Ascending aorta (tissue), 2 donors: ENCODE measurements at regions of chr1 and their contacts with region 1.

Region 1: GRCh38 chr1:54764133-54764921 is at the start of gene PARS2:
- DNase-seq: peak; percentile 92 to 98
- H3K4me3 ChIP-seq: peak within 1 kb of the TSS; percentile 70 to 86
- H3K27ac ChIP-seq: peak within 1 kb of the TSS; percentile 29 to 72
- H3K4me1 ChIP-seq: peaks cover 4 to 5% of the 10 kb centered on the region in 2 donors
- H3K27me3 ChIP-seq: no peaks in the 10 kb centered on the region
- CTCF ChIP-seq: no peak
- total RNA-seq, gene PARS2: 0.43 TPM

Region 2: DNA sequence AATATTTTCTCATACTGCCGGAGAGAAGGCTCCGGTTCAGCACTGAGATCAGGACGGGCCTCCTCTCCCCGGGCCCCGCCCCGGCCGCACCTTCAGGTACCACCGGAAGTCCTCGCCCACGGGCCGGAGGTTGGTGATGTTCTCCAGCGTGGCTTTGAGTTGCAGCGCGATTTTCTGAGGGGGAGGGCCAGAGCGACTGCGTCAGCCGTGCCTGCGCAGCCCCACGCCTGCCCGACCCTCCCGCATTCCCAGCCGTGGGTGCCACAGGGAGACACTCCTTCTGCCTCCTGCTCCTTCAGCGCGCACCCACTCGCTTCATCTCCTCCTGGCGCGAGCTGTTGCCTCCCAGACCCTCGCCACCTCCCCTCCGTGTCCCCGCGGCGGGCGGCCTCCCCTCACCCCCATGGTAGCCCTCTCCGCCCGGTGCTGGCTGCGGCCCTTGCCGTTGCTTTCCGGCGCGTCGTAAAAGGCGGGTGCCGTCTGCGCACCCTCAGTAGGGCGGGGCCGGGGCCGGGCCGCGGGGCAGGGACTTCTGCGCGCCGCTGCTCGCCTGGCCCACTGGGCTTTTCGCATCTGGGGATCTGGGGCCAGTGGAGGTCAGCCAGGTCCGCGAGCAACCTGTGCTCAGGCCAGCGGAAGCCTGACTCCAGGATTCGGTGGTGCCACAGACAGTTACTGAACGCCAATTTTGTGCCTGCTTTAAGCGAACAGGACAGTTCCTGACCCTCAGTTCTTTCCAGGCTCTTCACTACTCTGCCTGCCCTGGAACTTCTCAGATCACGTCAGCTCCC is 1544.0 kb before region 1 on chr1 and contains the start of gene CZIB:
- intact Hi-C with region 1: loop called (anchors 10 kb)
- DNase-seq: peak; percentile 65 to 96
- H3K4me3 ChIP-seq: peak within 1 kb of the TSS; percentile 72 to 88
- H3K27ac ChIP-seq: peak within 1 kb of the TSS; percentile 91 to 98
- H3K4me1 ChIP-seq: peaks cover 3 to 12% of the 10 kb centered on the region in 2 donors
- H3K27me3 ChIP-seq: no peaks in the 10 kb centered on the region
- CTCF ChIP-seq: no peak
- total RNA-seq, gene CZIB: 28.9 TPM

Region 3: GRCh38 chr1:53945433-53946251 is 818.7 kb before region 1 on chr1 and contains the start of gene IFT25:
- intact Hi-C with region 1: loop called (anchors 10 kb)
- DNase-seq: peak; percentile 87 to 98
- H3K4me3 ChIP-seq: peak within 1 kb of the TSS; percentile 80 to 96
- H3K27ac ChIP-seq: peak within 1 kb of the TSS; percentile 77 to 98
- H3K4me1 ChIP-seq: peaks cover 9 to 16% of the 10 kb centered on the region in 2 donors
- H3K27me3 ChIP-seq: no peaks in the 10 kb centered on the region
- CTCF ChIP-seq: no peak
- total RNA-seq, gene IFT25: not detected

Region 4: DNA sequence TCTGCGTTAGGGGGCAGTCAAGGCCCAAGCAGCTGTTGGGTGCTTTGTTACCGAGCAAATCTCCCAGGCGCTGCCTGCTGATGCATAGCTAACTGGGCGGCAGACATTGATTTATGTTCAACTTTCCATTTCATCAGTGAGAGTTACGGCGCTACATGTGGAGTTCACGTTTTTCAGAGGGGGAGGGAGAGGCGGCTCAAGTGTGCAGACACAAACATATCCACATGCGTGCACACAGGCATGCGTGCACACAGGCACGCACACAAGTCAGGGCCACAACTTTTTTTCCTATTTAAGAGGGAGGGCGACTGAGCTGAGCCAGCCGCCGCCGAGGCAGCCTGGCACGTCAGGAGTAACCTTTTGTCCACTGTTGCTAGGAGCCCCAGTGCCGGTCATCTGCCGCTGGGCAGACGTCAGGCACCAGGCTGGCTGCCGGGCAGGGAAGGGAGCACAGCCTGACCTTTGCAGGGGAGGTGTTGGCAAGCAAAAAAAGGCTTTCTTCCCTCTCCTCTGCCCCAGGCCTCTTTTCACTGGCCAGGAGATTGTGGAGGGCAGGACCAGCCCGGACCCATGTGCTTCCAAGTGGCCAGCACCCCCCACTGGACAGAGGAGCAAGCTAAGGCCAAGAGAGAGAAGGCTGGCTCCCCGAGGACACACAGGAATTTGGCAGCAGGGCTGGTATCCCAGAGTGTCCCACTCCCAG is 491.1 kb before region 1 on chr1:
- intact Hi-C with region 1: loop called (anchors 10 kb)
- DNase-seq: peak; percentile 53 to 93
- H3K4me3 ChIP-seq: peak overlapping the region in 1 of 2 donors; percentile 35
- H3K27ac ChIP-seq: peak overlapping the region; percentile 96 to 98
- H3K4me1 ChIP-seq: peaks cover 34 to 55% of the 10 kb centered on the region in 2 donors
- H3K27me3 ChIP-seq: no peaks in the 10 kb centered on the region
- CTCF ChIP-seq: peak; percentile 77 to 84 (median 83)

Region 5: GRCh38 chr1:54715493-54716298 is 48.6 kb before region 1 on chr1 and contains the start of gene TTC4:
- intact Hi-C with region 1: loop called (anchors 2 kb)
- DNase-seq: peak; percentile 25 to 88
- H3K4me3 ChIP-seq: peak within 1 kb of the TSS; percentile 69 to 92
- H3K27ac ChIP-seq: peak within 1 kb of the TSS; percentile 73 to 82
- H3K4me1 ChIP-seq: peaks cover 0 to 8% of the 10 kb centered on the region in 2 donors
- H3K27me3 ChIP-seq: no peaks in the 10 kb centered on the region
- CTCF ChIP-seq: no peak
- total RNA-seq, gene TTC4: 20.6 TPM